Lower leg skin (tissue), 4 donors: ENCODE measurements at regions of chr1 and their contacts with region 1.

Region 1: GRCh38 chr1:171990371-171990770 is 149.1 kb downstream of the DNM3 start:
- DNase-seq: no peak
- H3K4me3 ChIP-seq: no peak overlapping the region
- CTCF ChIP-seq: no peak
- POLR2A ChIP-seq: no peak

Region 2: GRCh38 chr1:171644805-171645483 is 345.4 kb before region 1 on chr1:
- intact Hi-C with region 1: loop called (anchors 5 kb)
- DNase-seq: peak; percentile 76 to 95
- H3K4me3 ChIP-seq: no peak overlapping the region
- CTCF ChIP-seq: peak in 1 of 3 donors; percentile 25
- POLR2A ChIP-seq: no peak